ENCODE measurements at regions of chr21 and their contacts with region 1.

Region 1: DNA sequence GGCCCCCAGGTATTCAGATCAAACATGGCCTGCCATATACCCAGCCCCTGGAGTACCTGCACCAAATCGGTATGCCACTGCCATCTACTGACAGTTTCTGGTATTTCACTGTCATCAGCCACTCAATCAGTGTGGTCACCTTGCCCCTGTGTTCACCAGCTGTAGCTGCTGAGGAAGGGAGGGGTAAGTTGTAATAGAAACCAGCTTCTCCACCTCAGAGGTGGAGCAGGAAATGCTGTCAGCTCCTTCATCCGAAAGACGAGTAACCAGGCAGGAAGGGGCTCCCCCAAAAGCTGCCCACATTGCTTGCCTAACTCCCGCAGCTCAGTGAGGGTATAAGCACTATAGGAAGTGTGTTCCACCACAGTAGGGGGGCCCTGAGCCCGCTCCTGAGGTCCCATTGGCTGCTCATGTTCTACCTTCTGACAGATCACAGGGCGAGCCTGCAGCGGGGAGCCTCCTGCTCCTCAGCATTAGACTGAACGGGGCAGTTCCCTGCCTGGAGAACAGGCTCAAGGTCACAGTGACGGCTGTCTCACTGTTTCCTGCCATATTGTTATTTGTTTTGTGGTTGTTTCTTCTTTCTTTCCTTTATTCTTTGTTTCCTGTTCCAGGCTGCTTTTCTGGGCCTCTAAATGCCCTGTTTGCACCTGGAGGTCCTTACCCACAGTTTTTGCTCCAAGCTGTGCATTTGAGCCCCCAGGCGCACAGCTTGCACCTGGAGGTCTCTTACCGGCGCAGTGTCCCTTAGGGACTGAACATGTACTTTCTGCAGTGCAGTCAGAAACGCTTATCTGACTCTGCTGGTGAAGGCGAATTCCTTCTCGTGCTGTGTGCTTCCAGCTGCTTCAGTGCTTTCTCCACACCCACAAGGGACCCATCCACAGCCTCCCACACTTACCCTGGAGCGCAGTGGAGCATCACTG is 1638.3 kb downstream of the MRPL39 start:
- DNase-seq: peak; percentile 94
- ATAC-seq: peak; percentile 90
- H3K4me3 ChIP-seq: peak overlapping the region; percentile 13 to 63 (median 35)
- H3K4me3 Mint-ChIP-seq: peak overlapping the region; percentile 86
- H3K27ac ChIP-seq: peak overlapping the region; percentile 62 to 66
- H3K27ac Mint-ChIP-seq: peak overlapping the region; percentile 80
- H3K4me1 ChIP-seq: peaks cover 16 to 22% of the 10 kb centered on the region in 2 donors
- H3K4me1 Mint-ChIP-seq: peaks cover 23% of the 10 kb centered on the region
- H3K27me3 ChIP-seq: no peaks in the 10 kb centered on the region
- H3K27me3 Mint-ChIP-seq: no peaks in the 10 kb centered on the region
- CTCF ChIP-seq: peak; percentile 87

Region 2: DNA sequence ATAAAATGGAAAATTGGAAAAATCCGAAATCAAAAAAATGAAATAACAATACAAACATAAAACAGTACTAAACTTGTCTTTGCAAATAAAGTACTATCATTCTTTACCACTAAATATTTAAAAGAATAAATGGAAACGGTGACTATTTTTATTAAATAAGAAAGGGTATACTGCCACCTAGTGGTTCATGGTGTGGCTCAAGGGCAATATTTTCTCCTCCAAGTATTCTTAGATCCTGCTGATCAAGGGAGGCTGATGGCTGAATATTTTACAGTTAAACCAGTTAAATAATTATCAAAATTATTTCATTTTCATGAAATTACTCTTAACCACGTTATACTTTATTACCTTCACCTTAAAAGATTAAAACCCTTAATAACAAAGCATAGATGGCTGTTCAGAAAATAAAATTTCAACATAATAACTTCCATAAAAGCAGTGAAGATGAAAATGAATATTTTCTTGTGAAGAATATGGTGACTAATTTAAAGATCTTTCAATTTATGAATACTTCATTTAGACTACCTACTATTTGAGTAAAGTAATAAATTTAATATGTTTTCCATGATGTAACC is 1176.9 kb before region 1 on chr21:
- CTCF ChIA-PET with region 1: interaction called, 3 read pairs
- POLR2A ChIA-PET with region 1: no interaction called
- intact Hi-C with region 1: loop called (anchors 2 kb)
- DNase-seq: peak; percentile 40
- ATAC-seq: no peak
- H3K4me3 ChIP-seq: no peak overlapping the region
- H3K4me3 Mint-ChIP-seq: no peak overlapping the region
- H3K27ac ChIP-seq: no peak overlapping the region
- H3K27ac Mint-ChIP-seq: no peak overlapping the region
- H3K4me1 ChIP-seq: no peaks in the 10 kb centered on the region
- H3K4me1 Mint-ChIP-seq: no peaks in the 10 kb centered on the region
- H3K27me3 ChIP-seq: no peaks in the 10 kb centered on the region
- H3K27me3 Mint-ChIP-seq: no peaks in the 10 kb centered on the region
- CTCF ChIP-seq: peak; percentile 93

Region 3: GRCh38 chr21:23789864-23790263 is 179.1 kb before region 1 on chr21:
- CTCF ChIA-PET with region 1: no interaction called
- POLR2A ChIA-PET with region 1: no interaction called
- intact Hi-C with region 1: no loop called
- DNase-seq: no peak
- ATAC-seq: no peak
- H3K4me3 ChIP-seq: no peak overlapping the region
- H3K4me3 Mint-ChIP-seq: no peak overlapping the region
- H3K27ac ChIP-seq: no peak overlapping the region
- H3K27ac Mint-ChIP-seq: no peak overlapping the region
- H3K4me1 ChIP-seq: no peaks in the 10 kb centered on the region
- H3K4me1 Mint-ChIP-seq: no peaks in the 10 kb centered on the region
- H3K27me3 ChIP-seq: no peaks in the 10 kb centered on the region
- H3K27me3 Mint-ChIP-seq: no peaks in the 10 kb centered on the region
- CTCF ChIP-seq: no peak

Region 4: DNA sequence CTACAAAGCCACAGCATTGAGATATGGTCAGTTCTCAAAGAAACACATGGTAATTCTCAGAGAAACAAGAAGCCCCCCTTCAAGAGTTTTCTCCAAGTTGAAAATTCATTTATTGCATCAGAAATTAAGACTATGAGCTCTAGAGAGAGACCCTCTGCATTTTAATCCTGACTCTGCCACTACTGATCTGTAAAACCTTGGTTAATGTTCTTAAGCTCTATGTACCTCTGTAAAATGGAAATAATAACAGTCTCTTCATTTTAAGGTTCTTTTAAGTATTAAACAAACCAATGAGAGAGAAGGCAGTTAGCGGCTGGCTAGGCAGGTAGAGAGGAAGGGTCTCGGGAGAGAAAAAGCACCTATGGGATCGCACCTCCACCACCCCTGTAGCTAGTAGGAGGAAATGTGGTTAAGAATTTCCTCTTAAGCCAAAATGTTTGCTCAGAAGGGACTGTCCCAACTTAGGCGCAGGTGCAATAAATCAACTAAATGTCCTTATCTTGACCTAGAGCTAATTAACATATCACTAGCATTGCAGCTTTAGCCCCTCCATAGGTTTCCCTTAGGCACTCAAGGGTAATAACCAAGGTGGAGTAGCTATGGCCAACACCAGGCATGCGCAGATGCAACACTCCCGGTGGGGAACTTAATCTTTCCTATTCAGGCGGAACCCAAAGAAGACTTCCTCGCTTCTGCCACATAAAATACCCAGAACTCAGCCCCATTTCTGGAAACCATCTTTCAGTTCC is 47.1 kb before region 1 on chr21:
- CTCF ChIA-PET with region 1: interaction called, 3 read pairs
- POLR2A ChIA-PET with region 1: no interaction called
- intact Hi-C with region 1: loop called (anchors 2 kb)
- DNase-seq: peak; percentile 69
- ATAC-seq: peak; percentile 79
- H3K4me3 ChIP-seq: peak overlapping the region in 1 of 5 experiments; percentile 27
- H3K4me3 Mint-ChIP-seq: peak overlapping the region; percentile 59
- H3K27ac ChIP-seq: peak overlapping the region; percentile 26 to 61
- H3K27ac Mint-ChIP-seq: peak overlapping the region; percentile 67
- H3K4me1 ChIP-seq: peaks cover 16 to 24% of the 10 kb centered on the region in 2 donors
- H3K4me1 Mint-ChIP-seq: peaks cover 27% of the 10 kb centered on the region
- H3K27me3 ChIP-seq: no peaks in the 10 kb centered on the region
- H3K27me3 Mint-ChIP-seq: no peaks in the 10 kb centered on the region
- CTCF ChIP-seq: no peak

Region 5: GRCh38 chr21:23955135-23955843 is 13.7 kb before region 1 on chr21:
- CTCF ChIA-PET with region 1: interaction called, 13 read pairs
- POLR2A ChIA-PET with region 1: no interaction called
- intact Hi-C with region 1: no loop called
- DNase-seq: peak; percentile 51
- ATAC-seq: peak; percentile 36
- H3K4me3 ChIP-seq: peak overlapping the region in 4 of 5 experiments; percentile 15 to 42 (median 32)
- H3K4me3 Mint-ChIP-seq: peak overlapping the region; percentile 77
- H3K27ac ChIP-seq: peak overlapping the region; percentile 21 to 64
- H3K27ac Mint-ChIP-seq: peak overlapping the region; percentile 38
- H3K4me1 ChIP-seq: peaks cover 25 to 52% of the 10 kb centered on the region in 2 donors
- H3K4me1 Mint-ChIP-seq: peaks cover 45% of the 10 kb centered on the region
- H3K27me3 ChIP-seq: no peaks in the 10 kb centered on the region
- H3K27me3 Mint-ChIP-seq: no peaks in the 10 kb centered on the region
- CTCF ChIP-seq: no peak

Measured in B cell (primary cell).